MCF 10A (cell line): ENCODE measurements at regions of chr19 and their contacts with region 1.

Region 1: DNA sequence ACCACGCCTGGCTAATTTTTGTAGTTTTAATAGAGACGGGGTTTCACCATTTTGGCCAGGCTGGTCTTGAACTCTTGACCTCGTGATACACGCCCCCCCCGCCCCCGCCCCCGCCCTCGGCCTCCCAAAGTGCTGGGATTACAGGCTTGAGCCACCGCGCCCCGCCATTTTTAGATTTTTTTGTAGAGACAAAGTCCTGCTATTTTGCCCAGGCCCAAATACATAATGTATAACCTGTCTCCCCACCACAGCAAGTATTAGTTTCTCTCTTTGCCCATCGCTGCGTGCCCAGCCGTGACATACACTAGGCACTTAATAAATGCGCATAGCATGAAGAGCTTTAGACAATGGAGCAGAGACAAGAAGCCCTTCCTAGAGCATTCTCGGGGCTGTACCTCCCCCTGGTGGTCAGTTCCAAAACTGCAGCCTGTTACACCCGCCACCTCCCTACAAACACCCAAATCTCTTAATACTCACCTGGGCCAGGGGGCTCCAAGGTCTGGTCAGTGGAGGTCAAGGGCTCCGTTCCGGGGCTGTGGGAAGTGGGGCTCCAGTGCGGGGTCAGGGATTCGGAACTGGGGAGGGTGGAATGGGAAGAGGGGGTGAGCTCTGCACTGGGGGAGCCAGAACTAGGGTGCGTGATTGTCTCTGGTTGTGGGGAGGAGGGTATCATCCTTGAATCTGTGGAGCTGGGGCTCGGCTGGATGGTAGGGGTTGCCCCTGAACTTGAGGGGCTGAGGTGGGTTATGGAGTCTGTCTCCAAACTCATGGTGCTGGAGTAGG is 22.5 kb downstream of the IQCN start:
- DNase-seq: peak; percentile 76
- H3K4me3 Mint-ChIP-seq: no peak overlapping the region
- H3K27ac Mint-ChIP-seq: no peak overlapping the region
- H3K4me1 Mint-ChIP-seq: no peaks in the 10 kb centered on the region
- H3K27me3 Mint-ChIP-seq: no peaks in the 10 kb centered on the region
- CTCF ChIP-seq: peak; percentile 89

Region 2: GRCh38 chr19:17703824-17704463 is 547.8 kb before region 1 on chr19:
- CTCF ChIA-PET with region 1: no interaction called
- POLR2A ChIA-PET with region 1: no interaction called
- intact Hi-C with region 1: no loop called
- DNase-seq: peak; percentile 46
- H3K4me3 Mint-ChIP-seq: no peak overlapping the region
- H3K27ac Mint-ChIP-seq: no peak overlapping the region
- H3K4me1 Mint-ChIP-seq: peaks cover 3% of the 10 kb centered on the region
- H3K27me3 Mint-ChIP-seq: peaks cover 16% of the 10 kb centered on the region
- CTCF ChIP-seq: peak; percentile 70

Region 3: GRCh38 chr19:18097217-18097992 is 154.4 kb before region 1 on chr19 and contains the start of gene MAST3:
- CTCF ChIA-PET with region 1: interaction called, 5 read pairs
- POLR2A ChIA-PET with region 1: no interaction called
- intact Hi-C with region 1: loop called (anchors 5 kb)
- DNase-seq: peak; percentile 83
- H3K4me3 Mint-ChIP-seq: peak within 1 kb of the TSS; percentile 63
- H3K27ac Mint-ChIP-seq: no peak within 1 kb of the TSS
- H3K4me1 Mint-ChIP-seq: peaks cover 6% of the 10 kb centered on the region
- H3K27me3 Mint-ChIP-seq: no peaks in the 10 kb centered on the region
- CTCF ChIP-seq: no peak
- total RNA-seq, gene MAST3: 4.1 and 5.9 TPM in 2 replicates

Region 4: GRCh38 chr19:18203863-18204393 is 47.9 kb before region 1 on chr19 and contains the start of gene RAB3A:
- CTCF ChIA-PET with region 1: interaction called, 38 read pairs
- POLR2A ChIA-PET with region 1: interaction called, 12 read pairs
- intact Hi-C with region 1: loop called (anchors 1 kb)
- DNase-seq: peak; percentile 100
- H3K4me3 Mint-ChIP-seq: peak within 1 kb of the TSS; percentile 95
- H3K27ac Mint-ChIP-seq: peak within 1 kb of the TSS; percentile 95
- H3K4me1 Mint-ChIP-seq: peaks cover 5% of the 10 kb centered on the region
- H3K27me3 Mint-ChIP-seq: no peaks in the 10 kb centered on the region
- CTCF ChIP-seq: no peak
- total RNA-seq, gene RAB3A: 0.68 and 0.81 TPM in 2 replicates

Region 5: DNA sequence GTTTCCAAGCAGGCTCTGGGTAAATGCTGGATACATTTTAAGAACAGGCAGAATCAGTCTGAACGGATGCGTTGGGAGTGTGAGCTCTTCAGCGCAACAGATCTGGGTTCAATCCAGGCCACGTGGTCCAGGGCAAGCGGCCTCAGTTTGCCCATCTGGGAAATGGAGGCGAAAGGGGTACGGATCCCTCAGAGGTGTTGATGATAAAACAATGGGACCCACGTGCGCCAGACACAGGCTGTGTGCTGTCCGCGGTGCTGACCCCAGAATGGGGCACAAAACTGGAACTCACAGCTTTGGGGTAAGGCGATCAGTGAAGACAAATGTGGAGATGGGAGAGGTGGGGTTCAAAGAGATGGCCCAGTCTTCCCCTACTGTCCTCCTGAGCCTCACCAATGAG is 12.5 kb before region 1 on chr19:
- CTCF ChIA-PET with region 1: interaction called, 11 read pairs
- POLR2A ChIA-PET with region 1: no interaction called
- intact Hi-C with region 1: no loop called
- DNase-seq: no peak
- H3K4me3 Mint-ChIP-seq: no peak overlapping the region
- H3K27ac Mint-ChIP-seq: no peak overlapping the region
- H3K4me1 Mint-ChIP-seq: no peaks in the 10 kb centered on the region
- H3K27me3 Mint-ChIP-seq: peaks cover 46% of the 10 kb centered on the region
- CTCF ChIP-seq: no peak

Region 6: DNA sequence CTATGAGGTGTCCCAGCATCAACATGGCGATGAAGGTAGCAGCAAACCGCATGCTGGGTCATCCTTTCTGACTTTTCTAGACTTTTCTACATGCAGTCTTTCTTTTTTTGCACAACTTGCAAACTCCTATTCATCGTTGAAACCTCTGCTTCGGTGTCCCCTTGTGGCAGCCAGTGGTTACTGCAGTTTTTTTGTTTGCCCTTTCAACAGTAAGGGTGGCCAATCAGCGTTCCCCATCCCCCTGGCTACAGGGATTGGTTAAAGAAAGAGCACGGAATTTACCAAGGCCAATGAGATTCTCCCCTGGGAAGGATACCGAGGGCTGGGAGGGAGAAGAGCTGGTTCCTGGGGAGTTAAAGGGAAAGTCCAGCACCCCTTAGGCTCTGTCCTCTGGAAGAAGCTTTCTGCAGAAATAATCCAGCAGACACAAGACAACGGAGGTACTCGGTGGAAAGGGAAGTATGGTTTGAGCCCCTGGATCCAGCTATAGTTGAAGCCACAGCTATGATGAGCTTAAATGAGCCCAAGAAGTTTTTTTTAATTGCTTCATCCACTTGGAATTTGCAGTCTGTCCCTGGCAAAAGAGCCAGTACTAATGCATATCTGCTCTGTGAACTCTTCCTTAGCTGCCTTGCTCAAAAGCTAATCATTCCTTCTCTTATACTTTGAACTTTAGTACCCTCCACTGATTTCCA is 76.7 kb after region 1 on chr19:
- CTCF ChIA-PET with region 1: interaction called, 13 read pairs
- POLR2A ChIA-PET with region 1: no interaction called
- intact Hi-C with region 1: no loop called
- DNase-seq: peak; percentile 99
- H3K4me3 Mint-ChIP-seq: peak overlapping the region; percentile 67
- H3K27ac Mint-ChIP-seq: no peak overlapping the region
- H3K4me1 Mint-ChIP-seq: peaks cover 12% of the 10 kb centered on the region
- H3K27me3 Mint-ChIP-seq: no peaks in the 10 kb centered on the region
- CTCF ChIP-seq: peak; percentile 80